Left lung (tissue), 14 donors: ENCODE measurements at regions of chr9 and their contacts with region 1.

Region 1: GRCh38 chr9:132341177-132341840 is 13.5 kb downstream of the SETX start:
- DNase-seq: no peak
- ATAC-seq: no peak
- H3K4me3 ChIP-seq: no peak overlapping the region
- H3K27ac ChIP-seq: no peak overlapping the region
- H3K4me1 ChIP-seq: no peaks in the 10 kb centered on the region
- H3K27me3 ChIP-seq: no peaks in the 10 kb centered on the region
- CTCF ChIP-seq: no peak

Region 2: GRCh38 chr9:132141344-132141947 is 199.9 kb before region 1 on chr9:
- intact Hi-C with region 1: no loop called
- DNase-seq: peak in 1 of 4 donors; percentile 79
- ATAC-seq: peak; percentile 70
- H3K4me3 ChIP-seq: peak overlapping the region in 1 of 2 donors; percentile 3
- H3K27ac ChIP-seq: no peak overlapping the region
- H3K4me1 ChIP-seq: peaks cover 0 to 7% of the 10 kb centered on the region in 2 donors
- H3K27me3 ChIP-seq: peaks cover 4 to 97% of the 10 kb centered on the region in 2 donors
- CTCF ChIP-seq: no peak

Region 3: GRCh38 chr9:132288361-132288760 is 52.9 kb before region 1 on chr9:
- intact Hi-C with region 1: loop called in 1 of 2 experiments (anchors 10 kb)
- DNase-seq: no peak
- ATAC-seq: no peak
- H3K4me3 ChIP-seq: no peak overlapping the region
- H3K27ac ChIP-seq: no peak overlapping the region
- H3K4me1 ChIP-seq: peaks cover 4 to 10% of the 10 kb centered on the region in 2 donors
- H3K27me3 ChIP-seq: no peaks in the 10 kb centered on the region
- CTCF ChIP-seq: no peak